Psoas muscle (tissue), 8 donors: ENCODE measurements at regions of chr1 and their contacts with region 1.

Region 1: GRCh38 chr1:61043010-61043820 is 39.1 kb upstream of the NFIA start:
- DNase-seq: peak; percentile 94 to 95
- ATAC-seq: peak; percentile 93 to 97 (median 94)
- H3K4me3 ChIP-seq: peak overlapping the region; percentile 57
- H3K27ac ChIP-seq: peak overlapping the region; percentile 67
- H3K4me1 ChIP-seq: no peaks in the 10 kb centered on the region
- H3K27me3 ChIP-seq: no peaks in the 10 kb centered on the region
- CTCF ChIP-seq: peak; percentile 92

Region 2: DNA sequence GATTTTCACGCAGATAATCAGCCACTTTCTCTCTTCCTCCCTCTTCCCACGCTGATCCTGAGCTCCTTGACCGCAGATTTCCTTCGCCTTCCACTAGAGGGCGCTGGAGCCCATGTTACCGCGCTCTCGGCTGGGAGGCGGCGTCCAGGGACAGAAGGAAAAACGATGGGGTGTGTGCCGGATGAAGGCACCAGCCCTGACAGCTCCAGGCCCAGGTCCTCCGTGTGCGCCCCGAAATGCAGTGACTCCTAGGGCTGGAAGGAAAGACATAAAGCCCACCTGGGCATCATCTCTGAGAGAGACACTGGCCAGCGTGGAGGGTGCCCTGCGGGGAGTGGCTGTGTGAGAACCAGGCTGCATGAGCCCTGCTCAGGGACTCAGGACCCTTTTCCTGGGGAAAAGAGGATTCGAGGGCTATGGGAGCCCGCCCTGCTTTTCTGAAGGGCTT is 1071.7 kb before region 1 on chr1:
- intact Hi-C with region 1: loop called (anchors 2 to 10 kb)
- DNase-seq: peak; percentile 62 to 79
- ATAC-seq: peak; percentile 79 to 94 (median 84)
- H3K4me3 ChIP-seq: no peak overlapping the region
- H3K27ac ChIP-seq: no peak overlapping the region
- H3K4me1 ChIP-seq: no peaks in the 10 kb centered on the region
- H3K27me3 ChIP-seq: peaks cover 0 to 4% (median 0%) of the 10 kb centered on the region in 3 donors
- CTCF ChIP-seq: peak; percentile 92

Region 3: DNA sequence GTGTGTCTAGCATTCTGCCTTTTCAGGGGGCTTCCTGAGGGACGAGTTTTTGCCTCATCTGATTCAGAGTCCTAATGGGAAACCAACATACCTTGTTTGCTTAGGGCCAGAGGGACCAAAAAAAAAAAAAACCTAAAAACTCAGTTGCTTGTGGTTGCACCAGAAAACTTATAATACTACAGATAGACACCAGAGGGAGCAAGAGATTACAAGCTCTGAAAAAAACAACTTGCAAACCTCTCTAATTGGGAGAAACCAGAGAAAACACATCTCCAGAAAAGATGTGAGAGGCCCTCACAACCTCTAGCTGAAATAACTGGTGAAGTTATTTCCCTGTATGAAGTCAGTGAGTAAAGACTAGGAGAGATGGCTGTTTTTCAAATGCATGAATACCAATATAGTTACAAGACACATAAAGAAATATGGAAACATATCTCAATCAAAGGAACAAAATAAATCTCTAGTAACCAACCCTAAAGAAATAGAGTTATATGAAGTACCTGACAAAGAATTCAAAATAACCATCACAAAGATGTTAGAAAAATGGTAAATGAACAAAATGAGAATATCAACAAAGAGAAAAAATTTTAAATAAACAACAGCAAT is 194.5 kb before region 1 on chr1:
- intact Hi-C with region 1: loop called (anchors 1 to 2 kb)
- DNase-seq: no peak
- ATAC-seq: no peak
- H3K4me3 ChIP-seq: no peak overlapping the region
- H3K27ac ChIP-seq: no peak overlapping the region
- H3K4me1 ChIP-seq: no peaks in the 10 kb centered on the region
- H3K27me3 ChIP-seq: no peaks in the 10 kb centered on the region
- CTCF ChIP-seq: peak; percentile 58

Region 4: DNA sequence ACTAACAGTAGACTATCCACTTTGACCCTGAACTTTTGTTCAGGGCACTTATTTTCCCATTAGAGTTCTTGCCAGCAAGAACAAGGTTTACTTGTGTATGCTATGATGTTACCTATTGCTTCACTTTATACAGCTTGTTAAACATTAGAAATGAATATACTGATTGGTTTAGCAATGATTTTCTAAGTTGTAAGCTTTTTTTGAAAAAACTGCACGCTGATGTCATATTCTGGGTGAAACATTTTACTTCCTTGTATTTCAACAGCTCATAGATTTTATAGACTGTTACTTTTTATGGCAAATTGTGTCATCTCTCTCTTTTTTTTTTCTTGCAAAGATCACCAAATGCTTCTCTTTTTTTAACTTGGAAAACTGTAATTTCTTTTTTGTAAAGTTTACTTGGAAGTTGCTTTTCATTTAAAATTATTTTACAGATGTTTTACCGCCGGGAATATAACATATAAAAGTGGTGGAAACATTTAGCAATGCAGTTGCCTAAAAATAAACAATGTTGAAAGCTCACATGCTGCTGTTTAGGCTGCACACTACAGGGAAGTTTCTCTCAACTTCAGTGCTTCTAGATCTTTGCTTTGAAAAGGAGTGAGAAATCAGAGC is 176.2 kb before region 1 on chr1:
- intact Hi-C with region 1: loop called in 1 of 2 experiments (anchors 1 kb)
- DNase-seq: no peak
- ATAC-seq: peak in 3 of 4 donors; percentile 43 to 48 (median 43)
- H3K4me3 ChIP-seq: peak overlapping the region; percentile 58
- H3K27ac ChIP-seq: peak overlapping the region; percentile 70
- H3K4me1 ChIP-seq: peaks cover 9% of the 10 kb centered on the region
- H3K27me3 ChIP-seq: peaks cover 0 to 3% (median 0%) of the 10 kb centered on the region in 3 donors
- CTCF ChIP-seq: no peak

Region 5: GRCh38 chr1:60969971-60970509 is 73.2 kb before region 1 on chr1:
- intact Hi-C with region 1: loop called (anchors 1 to 5 kb)
- DNase-seq: no peak
- ATAC-seq: peak; percentile 49 to 85 (median 67)
- H3K4me3 ChIP-seq: no peak overlapping the region
- H3K27ac ChIP-seq: no peak overlapping the region
- H3K4me1 ChIP-seq: no peaks in the 10 kb centered on the region
- H3K27me3 ChIP-seq: no peaks in the 10 kb centered on the region
- CTCF ChIP-seq: peak; percentile 56

Region 6: DNA sequence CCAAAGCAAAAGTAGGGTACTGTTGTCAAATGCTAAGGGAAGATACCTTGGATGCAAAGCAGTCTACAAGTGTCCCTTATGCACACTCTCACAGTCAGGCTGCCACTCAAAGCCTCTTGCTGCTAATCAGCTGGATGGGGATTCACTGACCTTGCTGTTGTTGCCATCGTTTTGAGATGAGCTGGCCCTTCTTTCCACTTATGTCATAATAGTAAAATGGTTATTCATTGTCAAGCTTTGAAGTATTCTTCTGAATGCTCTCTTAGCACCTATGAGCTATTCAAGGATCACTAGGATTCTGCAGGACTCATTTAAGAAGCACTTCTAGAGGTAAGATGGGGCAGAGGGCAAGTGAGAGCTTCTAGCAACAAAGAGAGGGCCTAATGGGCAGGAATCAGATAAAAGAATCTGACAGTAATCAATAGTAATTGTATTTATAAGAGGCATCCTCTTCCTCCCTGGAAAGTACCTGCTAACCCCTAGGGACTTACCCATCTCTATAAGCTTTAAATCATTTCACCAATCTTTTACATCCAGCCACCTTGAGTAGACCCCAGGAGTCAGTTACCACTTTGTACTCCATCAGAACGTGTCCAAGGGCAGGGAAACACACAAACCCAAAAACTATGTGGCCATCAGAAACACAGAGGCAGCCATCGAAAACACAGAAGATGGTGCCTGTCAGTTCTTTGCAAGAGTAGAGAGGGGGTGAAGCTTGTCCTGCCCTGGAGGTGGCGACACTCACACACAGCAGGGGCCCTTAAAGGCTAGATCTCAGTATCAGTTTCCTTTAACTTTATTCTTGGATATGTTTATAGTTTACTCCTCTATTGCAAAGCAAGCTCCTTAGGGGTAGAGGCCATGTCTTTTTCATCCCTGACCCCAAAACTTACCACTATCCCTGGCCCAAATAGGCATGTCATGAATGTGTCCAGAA is 64.5 kb before region 1 on chr1:
- intact Hi-C with region 1: loop called (anchors 2 to 5 kb)
- DNase-seq: peak; percentile 20 to 59
- ATAC-seq: peak in 3 of 4 donors; percentile 67 to 91 (median 82)
- H3K4me3 ChIP-seq: no peak overlapping the region
- H3K27ac ChIP-seq: no peak overlapping the region
- H3K4me1 ChIP-seq: no peaks in the 10 kb centered on the region
- H3K27me3 ChIP-seq: peaks cover 0 to 2% (median 0%) of the 10 kb centered on the region in 3 donors
- CTCF ChIP-seq: peak; percentile 49

Region 7: GRCh38 chr1:61005614-61006580 is 37.3 kb before region 1 on chr1:
- intact Hi-C with region 1: no loop called
- DNase-seq: no peak
- ATAC-seq: no peak
- H3K4me3 ChIP-seq: no peak overlapping the region
- H3K27ac ChIP-seq: no peak overlapping the region
- H3K4me1 ChIP-seq: peaks cover 5% of the 10 kb centered on the region
- H3K27me3 ChIP-seq: no peaks in the 10 kb centered on the region
- CTCF ChIP-seq: no peak

Region 8: DNA sequence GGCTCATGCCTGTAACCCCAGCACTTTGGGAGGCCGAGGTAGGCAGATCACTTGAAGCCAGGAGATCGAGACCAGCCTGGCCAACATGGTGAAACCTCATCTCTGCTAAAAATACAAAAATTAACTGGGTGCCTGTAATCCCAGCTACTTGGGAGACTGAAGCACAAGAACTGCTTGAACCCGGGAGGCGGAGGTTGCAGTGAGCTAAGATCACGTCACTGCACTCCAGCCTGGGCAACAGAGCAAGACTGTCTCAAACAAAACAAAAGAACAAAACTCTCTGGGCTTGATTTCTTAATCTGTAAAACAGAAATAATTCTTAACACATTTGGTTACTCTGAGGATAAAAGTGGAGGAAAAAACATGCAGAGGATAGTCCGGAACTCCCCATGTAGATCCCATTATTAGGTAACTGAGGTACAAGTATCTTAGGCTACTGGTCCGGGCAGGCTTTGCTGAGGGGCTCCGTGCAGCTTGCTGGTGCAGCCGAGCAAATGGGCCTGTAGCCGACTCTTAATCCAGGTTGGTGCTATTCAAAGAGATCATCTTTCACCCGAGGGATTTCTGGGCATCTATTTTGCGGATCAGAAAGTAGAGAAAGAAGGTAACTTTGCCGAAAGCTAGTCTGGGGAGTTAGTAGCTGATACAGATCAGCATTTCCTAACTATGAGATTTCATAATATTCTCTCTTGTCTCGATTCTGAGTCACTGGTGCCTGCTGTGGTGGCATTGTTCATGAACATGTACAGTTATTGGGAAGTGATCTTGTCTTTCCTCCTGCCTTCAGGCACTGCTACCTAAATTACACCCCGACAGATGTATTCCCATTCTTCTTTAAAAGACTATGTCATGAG is 95.9 kb after region 1 on chr1:
- intact Hi-C with region 1: no loop called
- DNase-seq: peak in 1 of 2 donors; percentile 20
- ATAC-seq: peak; percentile 38 to 79 (median 75)
- H3K4me3 ChIP-seq: peak overlapping the region; percentile 38
- H3K27ac ChIP-seq: peak overlapping the region; percentile 88
- H3K4me1 ChIP-seq: peaks cover 40% of the 10 kb centered on the region
- H3K27me3 ChIP-seq: no peaks in the 10 kb centered on the region
- CTCF ChIP-seq: no peak